OCI-LY7 (cell line): ENCODE measurements at regions of chr18 and their contacts with region 1.

Region 1: DNA sequence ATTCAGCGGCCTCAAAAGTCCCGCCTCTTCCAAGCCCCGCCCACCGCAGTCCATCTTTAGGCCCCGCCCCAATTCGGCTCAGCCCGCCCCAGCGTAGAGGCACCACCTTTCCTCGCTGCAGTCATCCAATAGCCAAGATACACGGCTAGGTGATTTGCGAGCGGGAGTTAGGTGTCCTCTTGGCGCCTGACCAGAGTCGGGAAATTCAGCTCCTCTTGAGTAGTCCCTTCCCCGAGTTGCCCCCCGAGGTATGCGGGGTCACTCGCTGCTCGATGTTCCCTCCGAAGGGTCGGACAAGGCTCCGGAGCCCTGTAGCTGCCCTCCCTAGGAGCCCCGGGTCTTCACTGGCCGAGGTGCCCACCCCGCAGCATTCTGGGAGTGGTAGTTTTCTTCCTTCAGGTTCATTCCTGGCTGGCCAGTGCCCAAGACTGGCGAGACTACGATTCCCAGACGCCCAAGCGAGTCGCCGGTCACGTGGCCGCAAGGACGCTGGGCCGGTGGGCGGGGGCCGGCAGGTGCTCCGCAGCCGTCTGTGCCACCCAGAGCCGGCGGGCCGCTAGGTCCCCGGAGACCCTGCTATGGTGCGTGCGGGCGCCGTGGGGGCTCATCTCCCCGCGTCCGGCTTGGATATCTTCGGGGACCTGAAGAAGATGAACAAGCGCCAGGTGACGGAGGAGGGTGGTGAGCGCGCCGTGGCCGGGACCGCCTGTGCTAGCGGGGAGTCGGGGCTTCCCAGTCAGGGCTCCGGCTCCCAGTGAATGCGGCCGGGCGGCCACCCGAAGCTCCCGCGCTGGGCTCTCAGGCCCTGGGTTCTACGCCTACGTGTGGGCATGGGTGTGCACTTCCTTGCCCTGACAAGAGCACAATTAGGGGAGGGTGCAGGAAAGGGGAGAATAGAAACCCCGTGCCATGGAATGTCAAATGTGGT is at the start of gene SEC11C:
- DNase-seq: peak; percentile 93
- H3K4me3 ChIP-seq: peak within 1 kb of the TSS; percentile 92
- H3K27ac ChIP-seq: peak within 1 kb of the TSS; percentile 59
- H3K4me1 ChIP-seq: peaks cover 28% of the 10 kb centered on the region
- CTCF ChIP-seq: no peak
- total RNA-seq, gene SEC11C: 37.4 and 52.6 TPM in 2 replicates

Region 2: GRCh38 chr18:59085797-59086196 is 53.8 kb before region 1 on chr18:
- CTCF ChIA-PET with region 1: no interaction called
- POLR2A ChIA-PET with region 1: interaction called, 10 read pairs
- intact Hi-C with region 1: loop called (anchors 1 kb)
- DNase-seq: no peak
- H3K4me3 ChIP-seq: no peak overlapping the region
- H3K27ac ChIP-seq: peak overlapping the region; percentile 59
- H3K4me1 ChIP-seq: peaks cover 32% of the 10 kb centered on the region
- CTCF ChIP-seq: no peak

Region 3: DNA sequence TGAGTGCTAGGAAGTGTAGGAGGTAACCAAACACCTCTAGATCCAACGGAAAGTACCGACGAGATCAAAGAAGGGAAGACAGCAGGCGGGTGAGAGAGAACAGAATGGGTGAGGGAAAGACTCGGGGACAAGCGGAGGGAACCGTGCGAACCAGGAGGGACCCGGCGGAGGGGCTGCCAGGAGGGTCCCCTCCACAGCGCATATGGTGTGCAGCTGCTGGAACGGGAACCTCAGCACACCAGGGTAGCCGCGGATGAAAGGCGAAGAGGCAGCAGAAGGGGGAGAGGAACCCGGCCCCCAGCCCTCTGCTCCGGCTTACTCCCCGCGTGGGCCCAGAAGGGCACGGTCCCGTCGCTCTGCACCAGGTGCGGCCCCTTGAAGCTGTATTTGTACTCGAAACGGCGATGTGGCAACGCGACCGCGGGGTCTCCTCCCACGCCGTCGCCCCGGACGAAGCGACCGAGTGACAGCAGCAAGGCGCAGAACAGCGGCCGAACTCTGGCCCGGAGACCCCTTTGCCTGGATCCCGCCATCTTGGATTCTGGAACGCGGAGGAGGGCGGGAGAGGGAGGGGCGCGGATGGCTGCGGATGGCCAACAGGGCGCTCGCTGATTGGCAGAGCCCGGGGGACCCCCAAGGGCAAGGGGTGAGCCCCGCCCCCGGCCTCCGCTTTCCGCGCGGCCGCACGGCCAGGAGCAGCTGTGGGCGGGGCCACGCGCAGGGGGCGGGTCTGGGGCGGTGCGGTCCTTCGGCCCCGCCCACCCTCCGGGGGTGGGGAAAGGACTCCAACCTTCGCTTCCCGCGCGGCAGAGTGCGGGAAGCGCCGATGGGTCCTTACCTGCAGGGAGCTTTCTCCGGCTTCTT is 219.3 kb after region 1 on chr18 and contains the start of gene LMAN1:
- CTCF ChIA-PET with region 1: no interaction called
- POLR2A ChIA-PET with region 1: no interaction called
- intact Hi-C with region 1: loop called (anchors 10 kb)
- DNase-seq: peak; percentile 88
- H3K4me3 ChIP-seq: peak within 1 kb of the TSS; percentile 97
- H3K27ac ChIP-seq: peak within 1 kb of the TSS; percentile 19
- H3K4me1 ChIP-seq: peaks cover 11% of the 10 kb centered on the region
- CTCF ChIP-seq: no peak
- total RNA-seq, gene LMAN1: 28.4 and 33.0 TPM in 2 replicates